Left colon (tissue), 2 donors: ENCODE measurements at regions of chr4 and their contacts with region 1.

Region 1: DNA sequence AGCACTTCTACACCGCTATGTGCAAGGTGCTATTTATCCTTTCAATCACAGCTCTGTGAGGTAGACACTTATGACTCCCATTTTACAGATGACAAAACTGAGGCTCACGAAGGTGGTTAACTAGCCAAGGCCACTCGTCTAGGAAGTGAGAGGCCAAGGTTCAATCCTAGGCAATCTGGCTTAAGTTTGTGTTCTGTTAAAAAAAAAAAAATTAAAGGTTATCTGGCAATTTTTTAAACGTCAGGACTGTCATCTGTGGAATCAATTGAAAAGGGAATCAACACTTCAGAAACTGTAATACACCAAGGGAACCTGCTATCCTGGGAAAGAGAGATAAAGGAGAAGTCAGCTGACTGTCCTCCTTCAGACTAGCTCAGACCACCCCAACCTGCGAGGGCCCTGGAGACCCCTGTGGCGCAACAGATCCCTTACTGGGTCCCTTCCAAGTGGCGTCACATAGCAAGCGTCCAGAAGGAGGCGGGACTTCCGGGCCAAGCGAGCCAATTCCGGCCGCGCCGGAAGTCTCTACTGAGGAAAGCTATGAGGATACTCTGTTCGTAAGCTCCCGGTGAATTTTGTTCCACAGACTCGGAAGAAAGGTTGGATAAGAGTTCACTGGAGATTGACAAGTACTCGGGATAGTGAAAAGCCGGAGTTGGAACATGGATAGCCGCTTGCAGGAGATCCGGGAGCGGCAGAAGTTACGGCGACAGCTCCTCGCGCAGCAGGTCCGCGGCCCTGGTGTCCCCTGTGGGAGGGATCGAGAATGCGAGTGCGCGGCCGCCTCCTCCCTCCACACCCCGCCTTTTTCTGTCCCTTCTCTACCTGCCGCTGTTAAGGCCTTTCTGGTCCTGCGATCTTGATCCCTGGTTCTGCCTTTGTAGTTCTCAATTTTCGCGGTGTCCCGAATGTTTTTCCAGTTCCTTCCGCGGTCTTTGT is at the start of gene METTL14:
- DNase-seq: peak; percentile 89 to 95
- ATAC-seq: peak; percentile 98
- total RNA-seq, gene METTL14: 34.3 to 36.2 TPM

Region 2: DNA sequence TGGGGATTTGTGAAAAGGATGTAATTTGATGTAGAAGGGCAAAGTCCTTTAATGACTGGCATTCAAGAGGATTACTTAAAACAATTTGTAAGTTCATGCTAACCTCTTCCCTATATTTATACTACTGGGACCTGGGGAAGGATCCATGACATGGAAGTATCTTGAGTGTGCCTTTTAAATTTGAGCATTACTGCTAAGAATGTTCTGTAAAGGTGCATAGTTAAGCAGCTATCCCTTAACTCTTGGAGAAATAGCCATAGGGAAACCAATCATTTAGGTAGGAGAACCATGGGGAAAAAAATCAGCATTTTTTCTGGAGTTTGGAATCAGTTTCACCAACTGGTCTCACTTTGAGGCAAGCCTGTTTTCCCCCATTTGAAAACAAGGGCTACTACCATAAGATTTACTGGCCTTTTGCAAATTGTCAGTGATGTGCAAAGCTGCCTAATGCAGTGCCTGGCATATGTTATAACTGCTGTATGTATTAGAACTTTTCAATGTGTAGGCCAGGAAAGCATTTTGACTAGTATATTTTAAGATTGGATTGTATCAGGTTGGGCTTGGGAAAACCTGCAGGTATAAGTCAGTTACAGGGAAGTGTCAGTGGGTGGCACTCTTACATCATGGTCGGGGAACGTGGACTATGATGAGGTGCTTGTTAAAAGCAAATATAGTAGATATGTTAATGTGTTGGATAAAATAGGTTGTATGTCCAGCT is 404.5 kb before region 1 on chr4:
- intact Hi-C with region 1: loop called in 1 of 2 experiments (anchors 10 kb)
- DNase-seq: peak; percentile 37 to 50
- ATAC-seq: peak; percentile 53

Region 3: DNA sequence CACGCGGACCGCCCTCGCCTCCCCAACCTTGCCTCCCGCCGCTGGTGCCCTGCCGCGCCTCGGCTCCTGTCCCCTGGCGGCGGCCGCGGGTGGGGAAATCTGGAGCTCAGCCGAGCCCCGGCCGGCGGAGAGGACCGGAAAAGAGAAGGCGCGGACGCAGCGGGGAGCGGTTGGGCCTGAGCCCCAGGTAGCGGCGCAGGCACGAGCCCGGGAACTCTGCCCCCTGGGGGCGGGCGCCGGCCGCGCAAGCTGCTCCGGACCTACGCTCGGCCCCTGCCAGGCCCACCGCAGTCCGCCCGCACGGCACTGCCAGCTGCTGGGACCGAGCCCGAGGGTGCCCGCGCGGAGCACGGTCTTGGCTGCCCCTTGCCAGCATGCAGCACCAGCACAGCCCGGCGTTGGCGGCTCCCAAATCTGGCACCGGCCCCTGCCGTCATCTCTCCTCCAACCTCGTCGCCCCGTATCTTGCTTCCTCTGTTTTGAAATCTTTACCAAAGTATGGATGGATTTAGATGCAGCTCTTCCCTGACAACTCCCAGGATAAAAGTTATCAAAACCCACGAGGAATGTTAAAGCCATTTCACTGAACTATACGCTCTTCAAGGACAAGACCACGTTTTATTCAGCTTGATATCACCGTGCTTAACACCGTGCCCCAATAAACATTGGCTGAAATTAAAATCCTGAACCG is 332.2 kb before region 1 on chr4 and contains the start of gene PRSS12:
- intact Hi-C with region 1: no loop called
- DNase-seq: peak; percentile 69 to 87
- ATAC-seq: peak; percentile 74
- total RNA-seq, gene PRSS12: 27.7 to 46.5 TPM

Region 4: GRCh38 chr4:118835571-118836300 is 150.6 kb after region 1 on chr4 and contains the start of gene SEC24D:
- intact Hi-C with region 1: no loop called
- DNase-seq: peak; percentile 85 to 90
- ATAC-seq: peak; percentile 94
- total RNA-seq, gene SEC24D: 41.0 to 62.7 TPM